Dendritic cell treated with granulocyte-macrophage colony-stimulating factor and Interleukin-4, amounts not matched to agents 40 ng/mL and 50 ng/mL, for 4 days (primary cell): ENCODE measurements at regions of chr12 and their contacts with region 1.

Region 1: GRCh38 chr12:57632694-57633477 is at the start of gene B4GALNT1:
- H3K4me3 Mint-ChIP-seq: peak within 1 kb of the TSS; percentile 68
- H3K27ac Mint-ChIP-seq: no peak within 1 kb of the TSS
- H3K4me1 Mint-ChIP-seq: peaks cover 20% of the 10 kb centered on the region
- H3K27me3 Mint-ChIP-seq: peaks cover 73% of the 10 kb centered on the region

Region 2: GRCh38 chr12:57611108-57611809 is 21.6 kb before region 1 on chr12 and contains the start of gene ARHGEF25:
- intact Hi-C with region 1: no loop called
- H3K4me3 Mint-ChIP-seq: peak within 1 kb of the TSS; percentile 68
- H3K27ac Mint-ChIP-seq: no peak within 1 kb of the TSS
- H3K4me1 Mint-ChIP-seq: peaks cover 20% of the 10 kb centered on the region
- H3K27me3 Mint-ChIP-seq: peaks cover 93% of the 10 kb centered on the region

Region 3: GRCh38 chr12:57693659-57694458 is 61.0 kb after region 1 on chr12 and contains the start of gene OS9:
- intact Hi-C with region 1: loop called (anchors 5 kb)
- H3K4me3 Mint-ChIP-seq: no peak within 1 kb of the TSS
- H3K27ac Mint-ChIP-seq: no peak within 1 kb of the TSS
- H3K4me1 Mint-ChIP-seq: peaks cover 14% of the 10 kb centered on the region
- H3K27me3 Mint-ChIP-seq: peaks cover 14% of the 10 kb centered on the region